PC-3 (cell line): ENCODE measurements at regions of chr2 and their contacts with region 1.

Region 1: DNA sequence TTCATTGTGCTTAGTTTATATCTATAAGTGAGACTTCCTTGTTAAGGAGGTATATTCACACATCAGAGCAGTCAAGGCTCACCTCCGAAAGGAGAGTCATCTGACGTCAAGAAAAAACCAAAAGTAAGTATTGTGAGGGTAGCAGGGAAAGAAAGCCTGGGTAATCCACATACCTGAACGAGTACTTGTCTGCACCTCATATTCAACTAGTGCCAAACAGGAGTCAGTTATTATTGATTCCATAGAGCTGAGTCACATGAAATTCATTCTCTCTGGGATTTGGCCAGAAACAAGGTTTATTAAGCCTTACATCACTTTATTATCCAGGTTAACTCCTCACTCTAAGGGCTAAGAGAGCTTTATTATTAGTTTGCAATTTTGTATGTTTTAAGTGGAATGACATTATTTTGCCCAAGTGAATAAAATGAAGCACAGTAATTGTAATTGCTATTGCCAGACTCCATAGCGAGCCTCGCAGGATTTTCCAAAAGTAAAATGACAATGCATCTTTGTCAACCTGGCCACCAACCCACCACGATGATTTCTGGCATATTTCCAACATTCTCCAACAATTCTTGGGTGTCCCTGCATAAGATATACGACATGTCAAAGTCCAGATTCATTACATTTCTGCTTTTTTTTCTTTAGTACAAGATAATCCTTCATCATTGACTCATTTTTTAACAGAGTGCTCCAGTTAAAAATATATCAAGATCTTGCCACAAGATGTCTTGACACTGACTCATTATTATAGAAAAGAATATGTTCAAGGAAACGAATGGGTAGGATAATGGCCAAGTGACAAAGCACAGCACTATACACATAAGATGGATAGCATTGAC is 1210.4 kb upstream of the ACVR2A start:
- DNase-seq: peak; percentile 97
- ATAC-seq: peak; percentile 95
- H3K4me3 ChIP-seq: peak overlapping the region; percentile 49
- H3K27ac ChIP-seq: peak overlapping the region; percentile 87
- H3K4me1 ChIP-seq: peaks cover 26% of the 10 kb centered on the region
- H3K27me3 ChIP-seq: no peaks in the 10 kb centered on the region
- CTCF ChIP-seq: no peak

Region 2: GRCh38 chr2:146438246-146438645 is 196.2 kb before region 1 on chr2:
- CTCF ChIA-PET with region 1: no interaction called
- POLR2A ChIA-PET with region 1: no interaction called
- intact Hi-C with region 1: no loop called
- DNase-seq: no peak
- ATAC-seq: no peak
- H3K4me3 ChIP-seq: no peak overlapping the region
- H3K27ac ChIP-seq: no peak overlapping the region
- H3K4me1 ChIP-seq: no peaks in the 10 kb centered on the region
- H3K27me3 ChIP-seq: no peaks in the 10 kb centered on the region
- CTCF ChIP-seq: no peak

Region 3: DNA sequence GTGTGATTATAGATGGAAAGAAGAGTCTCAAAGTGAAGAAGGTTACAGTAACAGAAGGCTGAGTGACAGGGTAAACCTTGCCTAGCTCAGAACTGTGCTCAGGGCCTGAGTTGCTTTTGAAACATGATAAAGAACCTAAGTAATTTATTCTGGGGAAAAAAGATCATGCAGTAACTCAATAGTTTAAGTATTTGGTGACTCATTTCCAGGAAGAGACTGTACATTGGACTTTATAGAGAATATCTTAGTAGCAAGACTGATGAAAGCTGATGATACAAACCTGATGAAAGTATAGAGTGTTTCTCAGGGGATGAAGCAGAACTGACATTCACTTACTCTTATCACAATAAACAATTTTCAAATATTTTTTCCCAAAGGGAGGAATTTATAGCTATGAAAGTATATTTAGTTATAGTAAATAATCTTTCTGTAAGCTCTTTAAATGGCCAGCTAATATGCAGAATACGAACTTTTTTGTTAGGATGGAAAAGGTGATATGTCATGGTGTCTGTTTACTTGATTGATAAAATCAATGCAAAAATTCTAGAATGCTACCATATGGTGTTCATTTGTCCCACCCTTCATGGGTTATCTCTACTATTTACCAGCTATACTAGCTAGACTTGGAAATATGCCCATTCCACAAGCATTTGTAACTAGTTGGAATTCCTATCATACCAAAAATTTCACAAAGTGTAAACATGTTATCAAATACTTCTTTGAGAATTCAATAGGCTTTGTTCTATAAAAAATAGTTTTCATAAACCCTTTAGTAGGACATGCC is 55.1 kb before region 1 on chr2:
- CTCF ChIA-PET with region 1: no interaction called
- POLR2A ChIA-PET with region 1: no interaction called
- intact Hi-C with region 1: loop called (anchors 2 kb)
- DNase-seq: peak; percentile 79
- ATAC-seq: peak; percentile 91
- H3K4me3 ChIP-seq: peak overlapping the region; percentile 3; the same call in 1 of the 2 replicates
- H3K27ac ChIP-seq: 0 out of 2 replicates have a peak overlapping the region, but pooled peaks have one; percentile 19
- H3K4me1 ChIP-seq: peaks cover 23% of the 10 kb centered on the region
- H3K27me3 ChIP-seq: no peaks in the 10 kb centered on the region
- CTCF ChIP-seq: no peak

Region 4: DNA sequence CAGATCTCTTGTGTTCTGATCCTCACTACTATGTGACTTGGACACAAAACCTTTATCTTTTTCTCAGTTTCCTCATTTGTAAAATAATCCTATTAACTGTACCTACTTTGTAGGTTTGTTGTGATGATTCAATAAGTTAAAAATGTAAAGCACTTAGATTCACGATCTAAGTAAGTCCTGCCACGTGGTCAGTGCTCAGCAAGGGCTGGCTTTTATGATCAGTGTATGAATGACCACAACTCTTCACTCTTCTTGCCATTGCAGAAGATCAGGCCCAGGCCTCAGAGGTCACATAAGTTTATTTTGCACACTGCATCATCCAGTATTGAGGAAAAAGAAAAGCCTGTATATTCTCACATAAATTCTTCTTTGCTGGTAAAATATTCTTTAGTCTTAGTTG is 17.8 kb after region 1 on chr2:
- CTCF ChIA-PET with region 1: no interaction called
- POLR2A ChIA-PET with region 1: no interaction called
- intact Hi-C with region 1: no loop called
- DNase-seq: peak; percentile 51
- ATAC-seq: peak; percentile 64
- H3K4me3 ChIP-seq: no peak overlapping the region
- H3K27ac ChIP-seq: no peak overlapping the region
- H3K4me1 ChIP-seq: 0 out of 2 replicates have a peak, but pooled peaks cover 6% of the 10 kb centered on the region
- H3K27me3 ChIP-seq: no peaks in the 10 kb centered on the region
- CTCF ChIP-seq: no peak

Region 5: DNA sequence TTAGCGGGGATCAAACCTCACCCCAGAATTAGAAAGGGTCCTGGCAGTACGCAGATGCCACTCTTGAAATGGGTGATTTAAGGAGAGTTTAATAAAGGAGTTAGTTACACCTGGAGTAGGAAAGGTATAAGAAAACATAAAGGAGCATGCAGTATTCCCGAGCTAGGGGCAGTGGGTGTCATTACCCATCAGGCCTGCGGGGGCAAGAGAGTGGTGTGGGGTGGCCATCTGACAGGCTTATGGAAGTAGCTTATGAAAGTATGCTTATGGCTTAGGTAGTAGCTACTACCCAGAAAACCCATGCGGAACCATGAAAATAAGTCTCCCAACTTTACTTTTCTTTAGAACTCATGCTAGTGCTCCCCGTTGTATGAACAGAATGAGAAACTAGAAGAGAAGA is 641.5 kb after region 1 on chr2:
- CTCF ChIA-PET with region 1: no interaction called
- POLR2A ChIA-PET with region 1: no interaction called
- intact Hi-C with region 1: no loop called
- DNase-seq: peak; percentile 21
- ATAC-seq: no peak
- H3K4me3 ChIP-seq: no peak overlapping the region
- H3K27ac ChIP-seq: no peak overlapping the region
- H3K4me1 ChIP-seq: peaks cover 31% of the 10 kb centered on the region
- H3K27me3 ChIP-seq: no peaks in the 10 kb centered on the region
- CTCF ChIP-seq: peak; percentile 44; the same call in 1 of the 2 replicates